Breast epithelium (tissue), 4 donors: ENCODE measurements at regions of chr3 and their contacts with region 1.

Region 1: GRCh38 chr3:137615659-137616418 is 148.3 kb upstream of the SOX14 start:
- DNase-seq: no peak
- H3K4me3 ChIP-seq: no peak overlapping the region
- H3K27ac ChIP-seq: no peak overlapping the region
- H3K4me1 ChIP-seq: no peaks in the 10 kb centered on the region
- H3K27me3 ChIP-seq: no peaks in the 10 kb centered on the region
- CTCF ChIP-seq: no peak
- POLR2A ChIP-seq: no peak

Region 2: DNA sequence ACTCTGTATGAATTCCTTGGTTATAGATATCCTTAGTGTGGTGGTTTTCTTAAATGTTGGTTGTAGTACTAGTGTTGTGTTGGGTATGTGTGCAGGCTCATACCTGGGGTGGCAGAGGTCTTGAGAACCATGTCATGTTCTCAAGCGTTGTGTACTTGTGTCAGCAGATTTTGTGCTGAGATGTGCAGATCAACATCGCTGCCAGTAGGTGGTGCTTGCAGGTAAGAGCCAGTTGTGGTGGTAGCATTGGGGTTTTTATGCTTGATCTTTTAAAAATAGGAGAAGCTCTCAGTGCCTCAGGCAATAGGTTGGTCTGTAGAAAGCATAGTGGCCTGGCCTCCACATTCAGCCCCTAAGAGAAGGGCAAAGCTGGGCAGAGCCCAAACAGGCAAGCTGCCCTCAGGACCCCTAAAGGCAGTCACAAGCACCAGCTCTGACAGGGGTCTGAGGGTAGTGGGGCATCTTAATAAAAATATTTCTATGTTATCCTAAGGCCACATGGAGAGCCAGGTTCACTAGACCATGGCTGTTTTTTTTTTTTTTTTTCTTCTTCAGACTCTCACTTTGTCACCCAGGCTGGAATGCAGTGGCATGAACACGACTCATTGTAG is 494.0 kb before region 1 on chr3:
- intact Hi-C with region 1: loop called (anchors 5 kb)
- DNase-seq: no peak
- H3K4me3 ChIP-seq: no peak overlapping the region
- H3K27ac ChIP-seq: no peak overlapping the region
- H3K4me1 ChIP-seq: no peaks in the 10 kb centered on the region
- H3K27me3 ChIP-seq: peaks cover 0 to 8% of the 10 kb centered on the region in 2 donors
- CTCF ChIP-seq: peak in 1 of 3 donors; percentile 14
- POLR2A ChIP-seq: no peak

Region 3: DNA sequence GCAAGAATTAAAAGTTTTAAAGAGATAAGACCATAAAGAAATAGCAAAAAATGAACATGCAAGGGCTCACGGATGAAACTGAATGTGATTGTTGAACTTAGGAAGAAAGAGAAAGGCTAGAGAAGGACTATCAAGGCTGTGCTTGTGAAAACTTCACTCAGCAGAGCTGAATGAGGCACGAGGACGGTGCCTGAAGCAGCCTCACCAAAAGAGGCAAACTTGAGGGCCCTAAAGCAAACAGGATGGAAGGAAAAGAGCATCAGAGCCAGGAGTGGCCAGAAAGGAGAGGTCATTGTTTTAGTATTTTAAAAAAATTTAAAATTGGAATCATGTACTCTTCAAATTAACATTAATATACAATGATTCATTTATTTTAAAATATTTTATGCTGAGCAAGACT is 42.9 kb before region 1 on chr3:
- intact Hi-C with region 1: no loop called
- DNase-seq: no peak
- H3K4me3 ChIP-seq: no peak overlapping the region
- H3K27ac ChIP-seq: no peak overlapping the region
- H3K4me1 ChIP-seq: no peaks in the 10 kb centered on the region
- H3K27me3 ChIP-seq: no peaks in the 10 kb centered on the region
- CTCF ChIP-seq: no peak
- POLR2A ChIP-seq: no peak

Region 4: DNA sequence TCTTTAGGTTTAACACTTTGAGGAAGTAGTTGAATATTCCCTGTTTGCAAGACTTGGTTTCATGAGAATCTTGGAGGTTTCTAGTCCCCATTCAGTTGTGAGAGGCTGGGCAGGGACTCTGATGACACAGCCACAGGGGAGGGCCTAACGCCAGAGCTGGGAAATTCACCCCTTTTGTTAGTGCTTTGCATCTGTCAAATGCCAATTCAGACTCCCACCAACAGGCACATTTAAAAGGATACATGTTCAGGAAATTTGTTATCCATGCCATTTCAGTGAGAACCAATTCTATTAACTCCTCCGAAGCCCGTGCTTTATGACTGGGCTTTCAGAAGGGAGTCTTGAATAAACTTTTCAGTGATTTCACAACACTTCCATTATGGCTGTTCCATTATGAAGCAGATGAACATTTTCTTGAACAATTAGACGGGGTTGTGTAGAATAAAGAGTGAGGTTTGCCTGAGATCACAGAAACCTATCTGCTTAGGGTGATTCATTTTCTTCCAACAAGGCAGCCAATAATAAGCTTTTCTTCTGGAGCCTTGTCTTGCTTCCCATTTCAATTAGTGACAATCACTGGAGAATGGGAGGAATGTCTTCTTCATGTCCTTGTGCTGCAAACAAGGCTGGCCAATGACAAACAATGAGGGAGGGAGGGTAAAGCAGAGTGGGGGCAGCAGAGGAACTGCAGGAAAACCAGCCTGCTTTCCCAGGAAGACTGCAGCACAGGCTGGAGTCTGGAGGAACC is 238.9 kb after region 1 on chr3:
- intact Hi-C with region 1: no loop called
- DNase-seq: no peak
- H3K4me3 ChIP-seq: no peak overlapping the region
- H3K27ac ChIP-seq: no peak overlapping the region
- H3K4me1 ChIP-seq: no peaks in the 10 kb centered on the region
- H3K27me3 ChIP-seq: peaks cover 0 to 10% of the 10 kb centered on the region in 2 donors
- CTCF ChIP-seq: no peak
- POLR2A ChIP-seq: no peak